MCF 10A (cell line): ENCODE measurements at regions of chr5 and their contacts with region 1.

Region 1: GRCh38 chr5:157328277-157328912 is 62.5 kb downstream of the CYFIP2 start:
- DNase-seq: peak; percentile 90
- H3K4me3 Mint-ChIP-seq: no peak overlapping the region
- H3K27ac Mint-ChIP-seq: no peak overlapping the region
- H3K4me1 Mint-ChIP-seq: no peaks in the 10 kb centered on the region
- H3K27me3 Mint-ChIP-seq: no peaks in the 10 kb centered on the region
- CTCF ChIP-seq: peak; percentile 97

Region 2: GRCh38 chr5:156815988-156816599 is 512.3 kb before region 1 on chr5:
- CTCF ChIA-PET with region 1: no interaction called
- POLR2A ChIA-PET with region 1: no interaction called
- intact Hi-C with region 1: no loop called
- DNase-seq: peak; percentile 8
- H3K4me3 Mint-ChIP-seq: no peak overlapping the region
- H3K27ac Mint-ChIP-seq: no peak overlapping the region
- H3K4me1 Mint-ChIP-seq: no peaks in the 10 kb centered on the region
- H3K27me3 Mint-ChIP-seq: no peaks in the 10 kb centered on the region
- CTCF ChIP-seq: peak; percentile 69

Region 3: GRCh38 chr5:157245477-157245876 is 82.9 kb before region 1 on chr5:
- CTCF ChIA-PET with region 1: interaction called, 14 read pairs
- POLR2A ChIA-PET with region 1: no interaction called
- intact Hi-C with region 1: no loop called
- DNase-seq: peak; percentile 47
- H3K4me3 Mint-ChIP-seq: no peak overlapping the region
- H3K27ac Mint-ChIP-seq: no peak overlapping the region
- H3K4me1 Mint-ChIP-seq: no peaks in the 10 kb centered on the region
- H3K27me3 Mint-ChIP-seq: no peaks in the 10 kb centered on the region
- CTCF ChIP-seq: no peak

Region 4: GRCh38 chr5:157303667-157304327 is 24.6 kb before region 1 on chr5:
- CTCF ChIA-PET with region 1: interaction called, 32 read pairs
- POLR2A ChIA-PET with region 1: interaction called, 3 read pairs
- intact Hi-C with region 1: no loop called
- DNase-seq: no peak
- H3K4me3 Mint-ChIP-seq: no peak overlapping the region
- H3K27ac Mint-ChIP-seq: no peak overlapping the region
- H3K4me1 Mint-ChIP-seq: no peaks in the 10 kb centered on the region
- H3K27me3 Mint-ChIP-seq: no peaks in the 10 kb centered on the region
- CTCF ChIP-seq: peak; percentile 7

Region 5: GRCh38 chr5:157354800-157355199 is 26.4 kb after region 1 on chr5:
- CTCF ChIA-PET with region 1: interaction called, 12 read pairs
- POLR2A ChIA-PET with region 1: interaction called, 3 read pairs
- intact Hi-C with region 1: no loop called
- DNase-seq: peak; percentile 19
- H3K4me3 Mint-ChIP-seq: no peak overlapping the region
- H3K27ac Mint-ChIP-seq: no peak overlapping the region
- H3K4me1 Mint-ChIP-seq: no peaks in the 10 kb centered on the region
- H3K27me3 Mint-ChIP-seq: no peaks in the 10 kb centered on the region
- CTCF ChIP-seq: peak; percentile 30

Region 6: GRCh38 chr5:157471709-157472108 is 143.3 kb after region 1 on chr5:
- CTCF ChIA-PET with region 1: interaction called, 178 read pairs
- POLR2A ChIA-PET with region 1: no interaction called
- intact Hi-C with region 1: no loop called
- DNase-seq: peak; percentile 64
- H3K4me3 Mint-ChIP-seq: no peak overlapping the region
- H3K27ac Mint-ChIP-seq: no peak overlapping the region
- H3K4me1 Mint-ChIP-seq: no peaks in the 10 kb centered on the region
- H3K27me3 Mint-ChIP-seq: no peaks in the 10 kb centered on the region
- CTCF ChIP-seq: peak; percentile 81

Region 7: DNA sequence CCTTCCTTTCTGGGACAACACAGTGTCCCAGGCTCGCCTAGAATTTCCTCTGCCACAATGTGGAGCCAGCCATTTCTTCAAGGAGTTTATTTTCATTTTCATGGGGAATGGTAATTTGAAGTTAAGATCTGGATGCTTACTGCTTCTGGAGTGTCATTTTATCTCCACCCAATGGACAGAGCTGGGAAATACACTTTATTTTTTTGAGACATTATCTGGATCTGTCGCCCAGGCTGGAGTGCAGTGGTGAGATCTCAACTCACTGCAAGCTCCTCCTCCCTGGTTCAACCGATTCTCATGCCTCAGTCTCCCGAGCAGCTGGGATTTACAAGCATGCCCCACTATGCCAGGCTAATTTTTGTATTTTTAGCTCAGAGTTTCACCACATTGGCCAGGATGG is 390.1 kb after region 1 on chr5:
- CTCF ChIA-PET with region 1: interaction called, 79 read pairs
- POLR2A ChIA-PET with region 1: interaction called, 5 read pairs
- intact Hi-C with region 1: loop called (anchors 1 kb)
- DNase-seq: peak; percentile 69
- H3K4me3 Mint-ChIP-seq: no peak overlapping the region
- H3K27ac Mint-ChIP-seq: no peak overlapping the region
- H3K4me1 Mint-ChIP-seq: no peaks in the 10 kb centered on the region
- H3K27me3 Mint-ChIP-seq: no peaks in the 10 kb centered on the region
- CTCF ChIP-seq: peak; percentile 83